Mammary epithelial cell (primary cell): ENCODE measurements at regions of chr6 and their contacts with region 1.

Region 1: DNA sequence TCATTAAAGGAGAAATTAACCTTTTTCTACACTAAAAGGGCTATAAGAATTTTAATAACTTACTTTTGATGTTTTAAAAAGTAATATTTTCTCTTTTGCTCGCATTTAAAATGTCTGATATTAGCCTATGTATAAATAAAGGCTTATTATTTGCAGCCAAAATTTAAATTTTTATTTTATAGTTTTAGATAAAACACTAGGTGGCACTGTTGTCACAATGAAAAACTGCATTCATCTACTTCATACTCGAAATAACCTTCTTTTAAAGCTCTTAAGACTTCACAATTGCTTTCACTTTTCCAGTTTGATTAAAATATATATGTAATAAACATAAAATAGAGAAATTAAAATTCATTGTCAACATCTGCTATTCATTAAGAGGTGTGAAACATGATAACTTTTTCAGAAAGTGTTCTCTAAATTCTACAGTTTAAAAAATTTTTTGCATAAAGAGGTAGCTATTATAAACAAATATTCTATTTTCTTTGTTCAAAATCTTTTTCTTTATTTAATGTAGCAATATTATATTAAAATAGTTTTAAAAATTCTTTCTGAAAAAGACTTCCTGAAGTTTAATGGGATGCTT is 78.8 kb upstream of the DEFB112 start:
- DNase-seq: no peak
- H3K4me3 ChIP-seq: no peak overlapping the region
- H3K27ac ChIP-seq: no peak overlapping the region
- H3K4me1 ChIP-seq: no peaks in the 10 kb centered on the region
- H3K27me3 ChIP-seq: peaks cover 4% of the 10 kb centered on the region
- CTCF ChIP-seq: peak; percentile 10 to 45

Region 2: DNA sequence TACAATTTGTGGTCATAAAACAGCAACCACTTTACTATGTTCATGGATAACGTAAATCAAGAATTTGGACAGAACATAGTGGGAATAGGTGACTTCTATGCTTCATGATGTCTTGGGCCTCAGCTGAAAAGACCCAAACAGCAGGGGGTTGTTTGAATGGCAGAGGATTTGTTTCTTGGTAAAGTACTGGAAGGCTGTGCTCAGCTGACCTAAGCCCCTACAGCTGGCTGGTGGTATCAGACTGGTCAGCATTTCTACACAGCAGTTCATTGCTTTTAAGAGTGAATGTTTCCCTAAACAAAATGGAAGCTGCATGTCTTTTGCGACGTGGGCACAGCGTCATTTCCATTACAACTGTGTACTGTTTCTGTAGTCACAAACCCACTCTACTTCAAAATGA is 69.7 kb after region 1 on chr6:
- CTCF ChIA-PET with region 1: no interaction called
- dilution Hi-C with region 1: no loop called
- in situ Hi-C with region 1: no loop called
- intact Hi-C with region 1: no loop called
- DNase-seq: no peak
- H3K4me3 ChIP-seq: no peak overlapping the region
- H3K27ac ChIP-seq: no peak overlapping the region
- H3K4me1 ChIP-seq: no peaks in the 10 kb centered on the region
- H3K27me3 ChIP-seq: peaks cover 3% of the 10 kb centered on the region
- CTCF ChIP-seq: no peak

Region 3: GRCh38 chr6:50264995-50265571 is 136.6 kb after region 1 on chr6:
- CTCF ChIA-PET with region 1: interaction called, 3 read pairs
- dilution Hi-C with region 1: no loop called
- in situ Hi-C with region 1: no loop called
- intact Hi-C with region 1: loop called (anchors 10 kb)
- DNase-seq: peak; percentile 21
- H3K4me3 ChIP-seq: no peak overlapping the region
- H3K27ac ChIP-seq: no peak overlapping the region
- H3K4me1 ChIP-seq: peaks cover 2% of the 10 kb centered on the region
- H3K27me3 ChIP-seq: no peaks in the 10 kb centered on the region
- CTCF ChIP-seq: peak; percentile 73 to 84

Region 4: DNA sequence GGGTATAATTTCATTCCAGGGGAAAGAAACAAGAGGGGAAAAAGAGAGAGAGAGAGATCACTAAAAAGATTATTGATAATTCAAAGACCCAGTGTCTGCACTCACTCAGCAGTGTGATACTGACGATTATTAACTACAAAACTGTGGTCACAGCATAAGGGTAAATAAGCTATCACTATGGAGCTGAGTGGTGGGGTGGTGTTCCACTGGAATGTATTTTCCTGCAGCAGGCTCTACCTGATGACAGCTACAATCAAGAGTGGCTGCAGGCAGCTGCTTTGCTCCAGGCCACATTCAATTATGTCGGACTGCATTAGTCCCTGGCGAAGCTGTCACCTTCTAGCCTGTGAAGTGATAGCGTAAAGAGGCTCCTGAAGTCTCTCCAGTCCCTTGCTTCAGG is 462.6 kb after region 1 on chr6:
- CTCF ChIA-PET with region 1: no interaction called
- dilution Hi-C with region 1: no loop called
- in situ Hi-C with region 1: loop called in 1 of 2 experiments (anchors 25 kb)
- intact Hi-C with region 1: no loop called
- DNase-seq: no peak
- H3K4me3 ChIP-seq: no peak overlapping the region
- H3K27ac ChIP-seq: no peak overlapping the region
- H3K4me1 ChIP-seq: no peaks in the 10 kb centered on the region
- H3K27me3 ChIP-seq: peaks cover 3% of the 10 kb centered on the region
- CTCF ChIP-seq: no peak

Region 5: DNA sequence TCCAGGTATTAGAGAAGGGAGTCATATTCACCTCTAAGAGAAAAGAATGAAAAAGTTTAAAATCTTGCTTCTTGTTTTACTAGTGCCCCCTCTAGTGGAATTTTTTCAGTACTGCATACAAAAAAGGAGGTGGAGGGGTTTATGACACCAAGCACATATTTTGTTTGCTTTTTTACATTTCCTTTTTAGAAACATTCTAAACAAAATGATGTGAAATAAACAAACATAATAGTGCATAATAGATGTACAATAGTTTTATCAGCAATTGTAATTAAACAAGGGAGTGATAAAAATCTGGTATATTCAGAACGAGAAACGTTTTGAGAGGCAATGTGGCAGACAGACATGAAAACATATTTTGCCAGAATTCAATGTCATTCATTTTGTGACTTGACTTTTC is 473.8 kb after region 1 on chr6:
- CTCF ChIA-PET with region 1: no interaction called
- dilution Hi-C with region 1: no loop called
- in situ Hi-C with region 1: loop called in 1 of 2 experiments (anchors 25 kb)
- intact Hi-C with region 1: loop called (anchors 1 kb)
- DNase-seq: peak; percentile 11
- H3K4me3 ChIP-seq: no peak overlapping the region
- H3K27ac ChIP-seq: no peak overlapping the region
- H3K4me1 ChIP-seq: no peaks in the 10 kb centered on the region
- H3K27me3 ChIP-seq: no peaks in the 10 kb centered on the region
- CTCF ChIP-seq: peak; percentile 74 to 76

Region 6: DNA sequence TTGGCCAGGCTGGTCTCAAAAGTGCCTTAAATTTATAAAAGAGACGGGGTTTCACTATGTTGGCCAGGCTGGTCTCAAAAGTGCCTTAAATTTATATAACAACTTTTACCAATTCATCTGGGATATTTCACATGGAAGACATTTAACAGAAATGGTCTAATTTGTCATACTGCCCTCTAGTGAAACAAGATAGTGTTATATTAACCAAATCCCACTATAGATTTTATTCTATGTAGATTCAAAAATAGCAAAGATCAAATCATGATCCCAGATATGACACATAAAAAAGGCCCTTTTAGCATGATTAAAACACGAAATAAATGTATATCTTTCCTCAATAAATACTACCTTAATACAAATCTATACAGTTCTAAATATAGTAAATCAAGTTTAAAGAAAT is 482.0 kb after region 1 on chr6:
- CTCF ChIA-PET with region 1: no interaction called
- dilution Hi-C with region 1: no loop called
- in situ Hi-C with region 1: loop called in 1 of 2 experiments (anchors 10 kb)
- intact Hi-C with region 1: no loop called
- DNase-seq: no peak
- H3K4me3 ChIP-seq: no peak overlapping the region
- H3K27ac ChIP-seq: no peak overlapping the region
- H3K4me1 ChIP-seq: no peaks in the 10 kb centered on the region
- H3K27me3 ChIP-seq: no peaks in the 10 kb centered on the region
- CTCF ChIP-seq: peak; percentile 31

Region 7: GRCh38 chr6:50791900-50792508 is 663.5 kb after region 1 on chr6:
- CTCF ChIA-PET with region 1: no interaction called
- dilution Hi-C with region 1: no loop called
- in situ Hi-C with region 1: loop called in 1 of 2 experiments (anchors 25 kb)
- intact Hi-C with region 1: loop called (anchors 5 kb)
- DNase-seq: peak; percentile 33
- H3K4me3 ChIP-seq: no peak overlapping the region
- H3K27ac ChIP-seq: no peak overlapping the region
- H3K4me1 ChIP-seq: peaks cover 7% of the 10 kb centered on the region
- H3K27me3 ChIP-seq: peaks cover 2% of the 10 kb centered on the region
- CTCF ChIP-seq: peak; percentile 61 to 86